MCF 10A (cell line): ENCODE measurements at regions of chr11 and their contacts with region 1.

Region 1: GRCh38 chr11:560305-561147 is at the starts of genes LMNTD2 and RASSF7:
- DNase-seq: peak; percentile 87
- H3K4me3 Mint-ChIP-seq: peak within 1 kb of the TSS; percentile 85
- H3K27ac Mint-ChIP-seq: peak within 1 kb of the TSS; percentile 23
- H3K4me1 Mint-ChIP-seq: peaks cover 14% of the 10 kb centered on the region
- H3K27me3 Mint-ChIP-seq: no peaks in the 10 kb centered on the region
- CTCF ChIP-seq: no peak
- total RNA-seq, gene LMNTD2: 6.1 and 8.0 TPM in 2 replicates
- total RNA-seq, gene RASSF7: 11.4 and 13.3 TPM in 2 replicates

Region 2: DNA sequence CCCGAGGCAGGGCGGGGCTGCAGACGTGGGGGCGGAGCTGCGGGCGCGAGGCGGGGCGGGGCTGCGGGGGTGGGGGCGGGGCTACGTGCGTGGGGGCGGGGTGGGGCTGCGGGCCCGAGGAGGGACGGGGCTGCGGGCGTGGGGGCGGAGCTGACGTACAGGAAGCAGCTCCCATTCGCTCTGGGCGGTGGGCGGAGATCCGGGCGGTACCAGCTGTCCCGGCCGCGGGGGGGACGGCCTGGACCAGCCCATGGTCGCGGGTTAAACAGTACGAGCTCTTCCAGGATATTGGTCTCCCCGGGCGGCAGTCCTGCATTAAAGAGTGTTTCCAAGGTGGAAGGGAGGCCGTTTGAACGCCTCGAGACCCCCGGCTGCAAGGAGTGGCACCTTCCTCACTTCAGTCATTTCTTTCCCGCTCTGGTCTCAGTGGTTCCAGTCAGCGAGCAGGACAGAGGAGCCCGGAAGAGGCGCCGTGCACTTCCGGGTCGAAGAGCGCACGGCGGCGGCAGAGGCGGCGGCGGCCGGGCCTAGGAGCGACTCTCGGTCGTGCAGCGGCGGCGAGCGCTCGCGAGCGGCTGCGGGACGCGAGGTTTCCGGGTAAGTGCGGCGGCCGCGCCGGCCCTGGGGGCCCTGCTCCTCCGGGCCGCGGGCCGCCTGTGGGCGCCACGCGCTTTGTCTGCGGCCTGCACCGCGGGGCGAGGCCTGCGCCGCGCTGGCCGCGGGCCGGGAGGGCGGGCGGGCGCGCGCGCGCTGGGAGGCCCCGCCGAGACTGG is 15.7 kb after region 1 on chr11 and contains the start of gene PHRF1:
- CTCF ChIA-PET with region 1: interaction called, 3 read pairs
- POLR2A ChIA-PET with region 1: interaction called, 22 read pairs
- intact Hi-C with region 1: no loop called
- DNase-seq: peak; percentile 91
- H3K4me3 Mint-ChIP-seq: peak within 1 kb of the TSS; percentile 79
- H3K27ac Mint-ChIP-seq: peak within 1 kb of the TSS; percentile 93
- H3K4me1 Mint-ChIP-seq: peaks cover 32% of the 10 kb centered on the region
- H3K27me3 Mint-ChIP-seq: no peaks in the 10 kb centered on the region
- CTCF ChIP-seq: no peak
- total RNA-seq, gene PHRF1: 29.9 and 31.8 TPM in 2 replicates